ENCODE measurements at regions of chr7 and their contacts with region 1.

Region 1: GRCh38 chr7:140003913-140004382 is 58.8 kb downstream of the PARP12 start:
- DNase-seq: peak; percentile 61
- H3K4me3 ChIP-seq: no peak overlapping the region
- H3K27ac ChIP-seq: no peak overlapping the region
- H3K27me3 ChIP-seq: no peaks in the 10 kb centered on the region
- CTCF ChIP-seq: peak; percentile 74

Region 2: DNA sequence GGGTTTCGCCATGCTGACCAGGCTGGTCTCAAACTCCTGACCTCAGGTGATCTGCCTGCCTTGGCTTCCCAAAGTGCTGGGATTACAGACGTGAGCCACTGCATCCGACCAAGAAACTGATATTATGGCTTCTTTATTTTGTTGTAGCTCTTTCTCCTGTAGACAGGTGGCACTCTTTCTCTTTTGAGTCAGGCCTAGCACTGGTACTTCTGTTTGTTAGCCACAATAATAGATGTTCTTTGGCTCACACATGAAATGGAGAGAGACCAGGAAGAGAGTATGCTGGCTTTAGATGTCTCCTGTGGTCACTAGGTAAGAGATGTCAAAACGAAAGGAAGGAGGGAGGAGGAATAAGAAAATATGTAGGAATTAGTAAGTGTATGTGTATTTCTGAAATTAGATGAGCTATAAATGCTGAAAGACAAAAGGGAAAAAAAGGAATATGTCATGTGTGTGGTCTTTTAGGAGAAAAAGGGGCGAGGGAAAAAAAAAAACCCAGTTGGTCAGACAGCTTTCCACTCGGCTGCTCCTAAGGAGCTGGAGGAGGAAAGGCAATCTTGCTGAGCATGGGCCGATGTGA is 401.7 kb before region 1 on chr7:
- in situ Hi-C with region 1: loop called (anchors 10 kb)
- DNase-seq: peak; percentile 24
- H3K4me3 ChIP-seq: no peak overlapping the region
- H3K27ac ChIP-seq: no peak overlapping the region
- H3K27me3 ChIP-seq: no peaks in the 10 kb centered on the region
- CTCF ChIP-seq: peak; percentile 67